MCF 10A (cell line): ENCODE measurements at regions of chr20 and their contacts with region 1.

Region 1: GRCh38 chr20:59782986-59783640 is 150.3 kb downstream of the SYCP2 start:
- DNase-seq: peak; percentile 55
- H3K4me3 Mint-ChIP-seq: no peak overlapping the region
- H3K27ac Mint-ChIP-seq: no peak overlapping the region
- H3K4me1 Mint-ChIP-seq: peaks cover 14% of the 10 kb centered on the region
- H3K27me3 Mint-ChIP-seq: no peaks in the 10 kb centered on the region
- CTCF ChIP-seq: peak; percentile 95

Region 2: DNA sequence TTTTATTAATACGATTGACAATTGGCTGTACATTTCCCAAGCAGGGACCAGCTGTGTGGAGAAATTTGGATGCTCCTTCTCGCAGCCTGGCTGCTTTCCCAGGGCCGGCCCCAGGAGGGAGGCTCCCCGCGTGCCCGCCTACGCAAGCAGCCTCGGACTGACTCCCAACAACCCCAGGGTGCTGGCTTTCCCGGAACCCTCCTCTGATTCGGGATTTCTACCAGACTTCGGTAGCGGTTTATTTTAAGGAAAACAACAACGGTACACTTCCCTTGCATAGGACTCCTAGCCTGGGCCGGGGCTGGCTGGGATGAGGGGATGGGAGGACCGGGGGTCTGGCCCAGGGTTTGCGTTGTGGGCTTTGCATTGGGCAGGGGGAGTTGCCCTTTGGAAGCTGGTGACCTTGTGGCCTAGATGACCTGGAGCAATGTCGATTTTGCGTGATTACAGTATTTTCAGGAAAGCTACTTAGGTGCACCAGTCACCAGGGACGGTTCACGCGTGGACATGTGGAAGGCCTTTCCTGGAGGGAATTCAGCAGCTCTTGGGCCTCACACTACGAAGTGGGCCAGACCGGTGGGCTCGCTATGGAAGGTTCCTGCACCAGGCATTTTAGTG is 199.6 kb before region 1 on chr20:
- CTCF ChIA-PET with region 1: no interaction called
- POLR2A ChIA-PET with region 1: no interaction called
- intact Hi-C with region 1: no loop called
- DNase-seq: peak; percentile 47
- H3K4me3 Mint-ChIP-seq: no peak overlapping the region
- H3K27ac Mint-ChIP-seq: no peak overlapping the region
- H3K4me1 Mint-ChIP-seq: no peaks in the 10 kb centered on the region
- H3K27me3 Mint-ChIP-seq: peaks cover 41% of the 10 kb centered on the region
- CTCF ChIP-seq: no peak

Region 3: DNA sequence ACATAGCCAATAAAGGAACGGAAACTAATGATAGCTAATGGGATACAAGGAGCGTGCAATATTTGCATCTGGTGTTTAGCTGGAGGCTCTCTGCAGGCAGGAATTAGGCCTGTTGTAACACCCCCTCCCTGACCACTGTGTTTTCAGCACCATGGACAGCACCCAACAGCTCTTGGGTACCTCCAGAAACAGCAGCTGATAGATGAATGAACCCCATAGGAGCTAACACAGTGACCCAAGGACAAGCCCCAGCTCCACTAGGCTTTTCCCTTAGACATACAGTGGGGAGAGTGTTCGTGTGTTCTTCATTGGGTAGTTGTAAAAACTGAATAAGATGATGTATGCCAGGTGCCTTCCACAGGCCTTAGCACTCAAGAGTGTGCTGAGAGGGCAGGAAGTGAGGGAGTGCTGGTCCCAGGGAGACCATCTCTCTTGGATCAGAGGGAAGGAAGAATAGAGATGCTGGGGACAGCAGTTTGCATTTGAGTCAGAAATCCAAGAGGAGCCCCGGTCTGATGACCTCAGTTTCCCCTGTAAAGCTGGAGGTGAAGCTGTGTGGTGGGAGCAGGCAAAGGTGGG is 17.4 kb before region 1 on chr20:
- CTCF ChIA-PET with region 1: interaction called, 124 read pairs
- POLR2A ChIA-PET with region 1: no interaction called
- intact Hi-C with region 1: no loop called
- DNase-seq: peak; percentile 52
- H3K4me3 Mint-ChIP-seq: no peak overlapping the region
- H3K27ac Mint-ChIP-seq: no peak overlapping the region
- H3K4me1 Mint-ChIP-seq: no peaks in the 10 kb centered on the region
- H3K27me3 Mint-ChIP-seq: peaks cover 47% of the 10 kb centered on the region
- CTCF ChIP-seq: no peak

Region 4: GRCh38 chr20:59820204-59821041 is 37.3 kb after region 1 on chr20:
- CTCF ChIA-PET with region 1: interaction called, 36 read pairs
- POLR2A ChIA-PET with region 1: interaction called, 3 read pairs
- intact Hi-C with region 1: no loop called
- DNase-seq: peak; percentile 22
- H3K4me3 Mint-ChIP-seq: peak overlapping the region; percentile 17
- H3K27ac Mint-ChIP-seq: peak overlapping the region; percentile 97
- H3K4me1 Mint-ChIP-seq: peaks cover 28% of the 10 kb centered on the region
- H3K27me3 Mint-ChIP-seq: no peaks in the 10 kb centered on the region
- CTCF ChIP-seq: no peak

Region 5: DNA sequence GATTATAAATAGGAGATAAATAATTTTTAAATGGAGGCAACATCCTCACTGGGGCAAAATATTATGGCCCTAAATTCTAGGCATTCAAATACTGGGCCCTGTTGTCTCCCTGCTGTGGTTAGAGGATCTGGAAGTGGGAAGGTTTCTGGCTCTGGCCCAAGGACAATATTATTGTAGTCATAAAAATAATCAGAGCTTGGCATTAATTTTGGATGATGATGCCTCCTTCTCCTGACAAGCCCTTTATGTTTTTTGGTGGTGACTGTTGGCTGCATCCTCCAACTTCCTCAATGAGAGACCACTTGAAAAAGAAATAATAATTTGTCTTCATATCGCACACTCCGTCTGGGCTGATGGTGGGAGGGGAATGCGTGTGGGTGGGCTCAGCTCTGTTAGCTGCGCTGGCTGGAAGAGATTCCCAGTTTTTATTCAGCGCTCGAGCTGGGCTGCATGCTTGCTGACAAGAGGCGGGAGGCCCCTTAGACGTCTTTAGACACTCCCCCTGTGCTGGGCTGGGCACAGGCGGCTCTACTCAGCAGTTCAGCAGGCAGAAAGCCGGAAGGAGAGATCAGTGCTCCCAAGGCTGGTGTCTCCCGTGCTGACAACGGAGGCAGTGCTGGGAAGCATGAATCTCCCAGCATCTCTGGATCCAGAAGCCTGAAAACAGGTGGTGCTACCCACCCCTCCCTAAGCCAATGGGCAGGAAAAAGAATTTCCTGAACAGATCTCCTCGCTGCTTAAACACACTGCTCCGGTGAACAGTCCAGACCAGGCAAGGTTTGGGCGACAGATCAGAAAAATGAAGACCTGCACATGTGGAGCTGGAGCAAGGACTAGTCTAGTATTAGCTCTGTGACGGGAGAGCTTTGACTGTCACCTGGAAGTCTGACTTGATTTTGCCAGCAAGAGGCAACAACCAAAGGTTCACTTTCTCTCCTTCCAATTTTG is 52.6 kb after region 1 on chr20:
- CTCF ChIA-PET with region 1: interaction called, 929 read pairs
- POLR2A ChIA-PET with region 1: interaction called, 13 read pairs
- intact Hi-C with region 1: no loop called
- DNase-seq: peak; percentile 81
- H3K4me3 Mint-ChIP-seq: peak overlapping the region; percentile 78
- H3K27ac Mint-ChIP-seq: peak overlapping the region; percentile 53
- H3K4me1 Mint-ChIP-seq: peaks cover 57% of the 10 kb centered on the region
- H3K27me3 Mint-ChIP-seq: no peaks in the 10 kb centered on the region
- CTCF ChIP-seq: no peak

Region 6: DNA sequence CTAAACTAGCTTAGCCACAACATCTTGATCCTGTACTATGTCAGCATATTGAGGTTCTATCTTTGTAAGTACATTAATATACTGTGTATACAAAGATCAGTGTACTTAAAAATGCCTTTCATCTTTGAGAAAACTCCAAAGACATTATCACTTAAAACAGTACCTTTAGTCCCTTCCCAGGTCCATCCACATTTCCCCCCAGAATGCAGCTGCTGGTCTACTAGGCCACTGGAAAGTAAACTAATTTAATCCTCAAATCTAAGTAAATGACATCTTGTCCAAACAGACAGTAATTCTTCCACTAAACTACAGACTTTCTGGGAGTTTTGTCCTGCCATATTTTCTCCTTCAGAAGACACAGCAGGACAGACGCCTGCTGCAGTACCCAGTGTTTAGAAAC is 81.6 kb after region 1 on chr20:
- CTCF ChIA-PET with region 1: interaction called, 47 read pairs
- POLR2A ChIA-PET with region 1: no interaction called
- intact Hi-C with region 1: no loop called
- DNase-seq: no peak
- H3K4me3 Mint-ChIP-seq: no peak overlapping the region
- H3K27ac Mint-ChIP-seq: no peak overlapping the region
- H3K4me1 Mint-ChIP-seq: no peaks in the 10 kb centered on the region
- H3K27me3 Mint-ChIP-seq: no peaks in the 10 kb centered on the region
- CTCF ChIP-seq: no peak

Region 7: GRCh38 chr20:59940174-59940971 is 157.3 kb after region 1 on chr20 and contains the starts of genes FAM217B and PPP1R3D:
- CTCF ChIA-PET with region 1: interaction called, 27 read pairs
- POLR2A ChIA-PET with region 1: interaction called, 9 read pairs
- intact Hi-C with region 1: loop called (anchors 5 kb)
- DNase-seq: peak; percentile 94
- H3K4me3 Mint-ChIP-seq: peak within 1 kb of the TSS; percentile 95
- H3K27ac Mint-ChIP-seq: peak within 1 kb of the TSS; percentile 96
- H3K4me1 Mint-ChIP-seq: peaks cover 27% of the 10 kb centered on the region
- H3K27me3 Mint-ChIP-seq: no peaks in the 10 kb centered on the region
- CTCF ChIP-seq: no peak
- total RNA-seq, gene FAM217B: 5.6 and 8.6 TPM in 2 replicates
- total RNA-seq, gene PPP1R3D: 2.4 and 3.5 TPM in 2 replicates

Region 8: DNA sequence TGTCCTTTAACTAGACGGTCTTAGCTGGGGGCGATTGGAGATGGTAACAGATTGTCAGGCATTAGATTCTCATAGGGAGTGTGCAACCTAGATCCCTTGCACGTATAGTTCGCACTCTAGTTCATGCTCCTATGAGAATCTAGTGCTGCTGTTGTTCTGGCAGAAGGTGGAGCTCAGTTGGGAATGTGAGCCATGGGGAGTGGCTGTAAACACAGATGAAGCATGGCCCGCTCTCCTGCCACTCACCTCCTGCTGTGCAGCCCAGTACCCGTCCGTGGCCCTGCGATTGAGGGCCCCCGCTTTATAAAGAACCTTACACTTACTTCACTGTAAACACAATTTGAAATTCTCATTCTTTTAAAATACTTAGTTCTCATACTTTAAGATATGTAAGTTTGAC is 514.5 kb after region 1 on chr20:
- CTCF ChIA-PET with region 1: no interaction called
- POLR2A ChIA-PET with region 1: no interaction called
- intact Hi-C with region 1: no loop called
- DNase-seq: no peak
- H3K4me3 Mint-ChIP-seq: no peak overlapping the region
- H3K27ac Mint-ChIP-seq: no peak overlapping the region
- H3K4me1 Mint-ChIP-seq: peaks cover 8% of the 10 kb centered on the region
- H3K27me3 Mint-ChIP-seq: no peaks in the 10 kb centered on the region
- CTCF ChIP-seq: no peak